ENCODE measurements at regions of chr17 and their contacts with region 1.

Region 1: GRCh38 chr17:6843241-6843880 is 11.8 kb upstream of the TEKT1 start:
- DNase-seq: peak; percentile 74
- H3K4me3 ChIP-seq: no peak overlapping the region
- H3K27ac ChIP-seq: no peak overlapping the region
- H3K4me1 ChIP-seq: no peaks in the 10 kb centered on the region
- CTCF ChIP-seq: peak; percentile 88

Region 2: GRCh38 chr17:6666077-6666521 is 177.3 kb before region 1 on chr17:
- CTCF ChIA-PET with region 1: no interaction called
- POLR2A ChIA-PET with region 1: no interaction called
- intact Hi-C with region 1: loop called (anchors 2 kb)
- DNase-seq: peak; percentile 61
- H3K4me3 ChIP-seq: no peak overlapping the region
- H3K27ac ChIP-seq: no peak overlapping the region
- H3K4me1 ChIP-seq: peaks cover 17% of the 10 kb centered on the region
- CTCF ChIP-seq: peak; percentile 87

Region 3: GRCh38 chr17:6786618-6787017 is 56.7 kb before region 1 on chr17:
- CTCF ChIA-PET with region 1: no interaction called
- POLR2A ChIA-PET with region 1: no interaction called
- intact Hi-C with region 1: no loop called
- DNase-seq: no peak
- H3K4me3 ChIP-seq: no peak overlapping the region
- H3K27ac ChIP-seq: no peak overlapping the region
- H3K4me1 ChIP-seq: no peaks in the 10 kb centered on the region
- CTCF ChIP-seq: no peak

Measured in OCI-LY7 (cell line).